ENCODE measurements at regions of chr17 and their contacts with region 1.

Region 1: GRCh38 chr17:37392024-37392590 is 14.5 kb downstream of the ACACA start:
- DNase-seq: no peak
- ATAC-seq: no peak
- H3K4me3 ChIP-seq: no peak overlapping the region
- H3K4me3 Mint-ChIP-seq: no peak overlapping the region
- H3K27ac ChIP-seq: no peak overlapping the region
- H3K27ac Mint-ChIP-seq: peak overlapping the region; percentile 4
- H3K4me1 ChIP-seq: no peaks in the 10 kb centered on the region
- H3K4me1 Mint-ChIP-seq: peaks cover 8% of the 10 kb centered on the region
- H3K27me3 ChIP-seq: no peaks in the 10 kb centered on the region
- H3K27me3 Mint-ChIP-seq: no peaks in the 10 kb centered on the region
- CTCF ChIP-seq: no peak

Region 2: GRCh38 chr17:37225458-37225857 is 166.6 kb before region 1 on chr17:
- CTCF ChIA-PET with region 1: no interaction called
- POLR2A ChIA-PET with region 1: no interaction called
- intact Hi-C with region 1: no loop called
- DNase-seq: no peak
- ATAC-seq: no peak
- H3K4me3 ChIP-seq: no peak overlapping the region
- H3K4me3 Mint-ChIP-seq: no peak overlapping the region
- H3K27ac ChIP-seq: no peak overlapping the region
- H3K27ac Mint-ChIP-seq: no peak overlapping the region
- H3K4me1 ChIP-seq: no peaks in the 10 kb centered on the region
- H3K4me1 Mint-ChIP-seq: no peaks in the 10 kb centered on the region
- H3K27me3 ChIP-seq: no peaks in the 10 kb centered on the region
- H3K27me3 Mint-ChIP-seq: no peaks in the 10 kb centered on the region
- CTCF ChIP-seq: no peak

Region 3: GRCh38 chr17:37373530-37374159 is 18.5 kb before region 1 on chr17:
- CTCF ChIA-PET with region 1: interaction called, 12 read pairs
- POLR2A ChIA-PET with region 1: no interaction called
- intact Hi-C with region 1: loop called (anchors 1 kb)
- DNase-seq: peak; percentile 30 to 80 (median 58)
- ATAC-seq: peak; percentile 98
- H3K4me3 ChIP-seq: no peak overlapping the region
- H3K4me3 Mint-ChIP-seq: no peak overlapping the region
- H3K27ac ChIP-seq: no peak overlapping the region
- H3K27ac Mint-ChIP-seq: no peak overlapping the region
- H3K4me1 ChIP-seq: no peaks in the 10 kb centered on the region
- H3K4me1 Mint-ChIP-seq: peaks cover 3% of the 10 kb centered on the region
- H3K27me3 ChIP-seq: no peaks in the 10 kb centered on the region
- H3K27me3 Mint-ChIP-seq: no peaks in the 10 kb centered on the region
- CTCF ChIP-seq: peak; percentile 96

Region 4: DNA sequence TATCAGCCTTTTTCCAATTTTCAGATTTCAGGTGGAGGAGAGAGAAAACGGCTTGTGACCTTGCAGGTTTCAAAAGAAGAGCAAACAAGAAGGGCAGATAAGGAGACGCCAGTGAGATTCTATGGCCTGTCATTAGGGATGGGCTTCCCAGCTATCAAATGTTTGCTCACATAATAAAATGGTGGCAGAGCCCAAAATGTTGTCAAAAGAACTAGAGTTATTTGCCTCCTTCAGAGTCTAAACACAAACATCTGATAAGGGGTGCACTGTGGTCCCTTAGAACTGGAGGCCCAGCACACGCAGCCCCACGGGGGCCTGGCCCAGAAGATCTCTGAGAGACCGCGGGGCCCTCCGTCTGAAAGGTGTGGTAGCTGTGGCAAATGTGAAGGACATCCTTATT is 297.2 kb after region 1 on chr17:
- CTCF ChIA-PET with region 1: no interaction called
- POLR2A ChIA-PET with region 1: no interaction called
- intact Hi-C with region 1: no loop called
- DNase-seq: no peak
- ATAC-seq: no peak
- H3K4me3 ChIP-seq: no peak overlapping the region
- H3K4me3 Mint-ChIP-seq: no peak overlapping the region
- H3K27ac ChIP-seq: no peak overlapping the region
- H3K27ac Mint-ChIP-seq: no peak overlapping the region
- H3K4me1 ChIP-seq: no peaks in the 10 kb centered on the region
- H3K4me1 Mint-ChIP-seq: no peaks in the 10 kb centered on the region
- H3K27me3 ChIP-seq: no peaks in the 10 kb centered on the region
- H3K27me3 Mint-ChIP-seq: no peaks in the 10 kb centered on the region
- CTCF ChIP-seq: no peak